ENCODE measurements at regions of chr17 and their contacts with region 1.

Region 1: GRCh38 chr17:77266891-77267341 is 126.1 kb downstream of the SEC14L1 start:
- DNase-seq: peak in 1 of 2 experiments; percentile 83
- H3K4me3 ChIP-seq: no peak overlapping the region
- H3K27ac ChIP-seq: no peak overlapping the region
- H3K4me1 ChIP-seq: peaks cover 0 to 11% (median 4%) of the 10 kb centered on the region in 4 experiments; a peak in 3 of 7 replicates
- H3K27me3 ChIP-seq: no peaks in the 10 kb centered on the region
- CTCF ChIP-seq: peak; percentile 85 to 95 (median 94)
- EP300 ChIP-seq: no peak
- POLR2A ChIP-seq: no peak
- RAD21 ChIP-seq: peak; percentile 52 to 60

Region 2: DNA sequence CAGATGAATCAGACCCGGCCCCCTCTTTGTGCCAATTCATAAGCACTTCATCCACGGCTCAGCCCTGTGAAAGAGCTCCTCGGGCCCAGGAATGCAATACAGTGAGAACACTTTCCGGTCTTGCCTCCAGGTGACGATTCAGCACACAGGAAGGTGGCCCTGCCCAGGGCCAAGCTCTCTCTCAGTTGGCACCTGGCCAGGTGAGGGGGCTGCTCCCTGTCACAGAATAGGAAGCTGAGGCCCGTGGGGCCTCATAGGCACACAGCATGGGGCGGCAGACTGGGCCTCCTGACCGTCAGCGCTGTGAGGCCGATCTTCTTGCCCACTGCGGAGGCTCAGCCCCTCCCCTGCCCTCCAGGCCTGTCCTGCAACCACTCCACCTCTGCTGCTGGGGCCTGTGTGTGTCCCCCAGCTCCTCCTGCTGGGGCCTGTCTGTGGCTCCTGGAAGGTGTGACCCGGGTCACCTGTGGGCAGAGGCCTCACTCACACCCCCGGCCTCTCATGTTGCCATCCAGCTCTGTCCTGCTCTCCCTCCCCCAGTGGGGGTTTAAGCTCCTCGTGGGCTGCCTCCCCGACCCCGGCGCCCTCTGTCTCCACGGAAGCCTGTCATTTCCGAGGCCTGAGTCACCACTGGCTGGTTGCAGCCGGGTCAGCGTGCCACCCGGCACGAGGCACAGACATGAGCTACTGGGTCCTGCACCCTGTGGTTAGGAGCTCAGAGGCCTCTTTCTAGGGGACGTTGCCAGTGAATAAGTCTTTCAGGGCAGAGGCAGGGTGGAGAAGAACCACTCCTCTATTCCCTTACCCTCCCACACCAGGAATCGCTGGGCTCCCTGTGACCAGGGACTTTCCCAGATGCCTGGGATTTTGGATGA is 11.7 kb before region 1 on chr17:
- CTCF ChIA-PET with region 1: interaction called, 11 read pairs
- POLR2A ChIA-PET with region 1: interaction called, 3 read pairs
- DNase-seq: no peak
- H3K4me3 ChIP-seq: no peak overlapping the region
- H3K27ac ChIP-seq: no peak overlapping the region
- H3K4me1 ChIP-seq: peaks cover 4 to 10% (median 5%) of the 10 kb centered on the region in 4 experiments; a peak in 6 of 7 replicates
- H3K27me3 ChIP-seq: no peaks in the 10 kb centered on the region
- CTCF ChIP-seq: 0 out of 4 replicates have a peak, but pooled peaks of 1 of the 3 experiments have one; percentile 4
- EP300 ChIP-seq: no peak
- POLR2A ChIP-seq: no peak
- RAD21 ChIP-seq: no peak; a peak in 1 of 4 replicates

Region 3: GRCh38 chr17:77280304-77280910 is 13.5 kb after region 1 on chr17:
- CTCF ChIA-PET with region 1: interaction called, 12 read pairs
- POLR2A ChIA-PET with region 1: no interaction called
- DNase-seq: peak in 1 of 2 experiments; percentile 66
- H3K4me3 ChIP-seq: peak overlapping the region; percentile 39 to 65 (median 45)
- H3K27ac ChIP-seq: no peak overlapping the region
- H3K4me1 ChIP-seq: peaks cover 0 to 18% (median 13%) of the 10 kb centered on the region in 4 experiments; a peak in 5 of 7 replicates
- H3K27me3 ChIP-seq: peaks cover 0 to 24% (median 18%) of the 10 kb centered on the region in 4 experiments; a peak in 5 of 7 replicates
- CTCF ChIP-seq: no peak
- EP300 ChIP-seq: no peak
- POLR2A ChIP-seq: no peak
- RAD21 ChIP-seq: no peak

Region 4: GRCh38 chr17:77337150-77337549 is 70.2 kb after region 1 on chr17:
- CTCF ChIA-PET with region 1: no interaction called
- POLR2A ChIA-PET with region 1: no interaction called
- DNase-seq: no peak
- H3K4me3 ChIP-seq: no peak overlapping the region
- H3K27ac ChIP-seq: no peak overlapping the region
- H3K4me1 ChIP-seq: no peaks in the 10 kb centered on the region
- H3K27me3 ChIP-seq: no peaks in the 10 kb centered on the region
- CTCF ChIP-seq: no peak
- EP300 ChIP-seq: no peak
- POLR2A ChIP-seq: no peak
- RAD21 ChIP-seq: no peak

Measured in H1 (cell line).